HCT116 (cell line): ENCODE measurements at regions of chrX and their contacts with region 1.

Region 1: DNA sequence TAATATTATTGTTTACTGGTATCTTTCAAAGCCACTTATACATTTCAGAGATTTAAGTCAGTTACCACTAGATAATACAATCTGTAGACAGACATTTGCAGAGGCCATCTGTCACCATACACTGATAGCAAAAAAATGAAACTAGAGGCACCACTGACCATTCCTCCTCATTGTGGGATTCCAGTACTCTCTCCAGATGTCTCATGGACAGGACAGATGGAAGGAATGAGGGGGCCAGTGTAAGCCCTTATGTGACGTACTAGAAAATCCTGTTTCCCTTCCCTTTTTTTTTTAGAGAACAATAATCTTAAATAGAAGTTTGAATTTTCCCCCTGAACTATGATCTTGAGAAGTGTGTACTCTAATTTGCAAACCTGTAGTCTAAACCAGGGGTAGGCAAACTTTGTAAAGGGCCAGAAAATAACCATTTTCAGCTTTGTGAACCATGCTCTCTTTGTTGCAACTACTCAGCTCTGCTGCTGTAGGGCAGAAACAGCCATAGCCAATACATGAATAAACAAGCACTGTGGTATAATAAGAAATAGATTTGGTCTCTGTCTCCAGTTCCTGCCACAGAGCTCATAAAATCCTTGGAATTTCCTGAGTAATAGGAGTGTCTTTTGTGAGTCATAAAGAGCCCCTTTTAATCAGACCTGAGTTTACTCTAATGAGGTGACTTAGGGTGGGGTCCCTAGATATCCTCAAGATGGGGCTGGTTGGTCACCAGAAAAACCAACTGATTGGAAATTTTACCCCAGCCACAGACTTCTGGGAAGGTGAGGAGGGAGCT is 90.4 kb downstream of the MOSPD2 start:
- DNase-seq: peak; percentile 49
- ATAC-seq: peak; percentile 87
- H3K4me3 ChIP-seq: peak overlapping the region in 1 of 2 experiments; percentile 38; a peak in 2 of 4 replicates
- H3K27ac ChIP-seq: peak overlapping the region; percentile 72
- H3K4me1 ChIP-seq: peaks cover 14 to 19% of the 10 kb centered on the region in 2 experiments; a peak in 3 of 4 replicates
- H3K27me3 ChIP-seq: no peaks in the 10 kb centered on the region
- CTCF ChIP-seq: no peak
- POLR2A ChIP-seq: no peak
- RAD21 ChIP-seq: peak; percentile 25; the same call in 1 of the 2 replicates

Region 2: DNA sequence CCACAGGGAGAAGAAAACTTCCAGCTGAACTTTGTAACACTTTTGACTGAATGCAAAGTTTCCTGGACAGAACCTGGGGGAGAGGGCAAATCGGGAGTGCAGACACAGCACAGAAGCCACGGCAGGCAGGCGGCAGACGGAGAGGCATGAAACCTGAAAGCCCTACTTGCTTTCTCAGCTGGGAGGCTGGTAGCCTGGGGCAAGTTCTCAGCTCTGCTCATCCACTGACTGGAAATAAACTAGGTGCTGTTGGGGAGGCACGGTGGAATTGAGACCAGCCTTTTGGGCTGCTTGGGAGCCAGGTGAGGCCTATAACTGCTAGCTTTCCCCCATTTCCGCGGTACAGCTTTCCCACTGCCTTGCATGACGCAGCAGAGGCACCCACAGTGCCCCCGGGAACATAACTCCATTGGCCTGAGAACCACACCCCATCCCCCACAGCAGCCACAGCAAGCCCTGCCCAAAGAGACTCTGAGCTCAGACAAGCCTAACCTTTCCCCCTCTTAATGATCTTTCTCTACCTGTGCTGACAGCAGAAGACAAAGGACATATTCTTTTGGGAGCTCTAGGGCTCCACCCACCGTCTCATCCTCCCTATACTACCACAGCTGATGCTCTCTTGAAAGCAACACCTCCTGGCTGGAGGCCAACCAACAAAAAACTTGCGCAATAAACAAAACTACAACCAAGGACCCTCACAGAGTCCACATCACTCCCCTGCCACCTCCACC is 205.7 kb before region 1 on chrX:
- CTCF ChIA-PET with region 1: no interaction called
- POLR2A ChIA-PET with region 1: no interaction called
- RAD21 ChIA-PET with region 1: no interaction called
- intact Hi-C with region 1: no loop called
- DNase-seq: no peak
- ATAC-seq: no peak
- H3K4me3 ChIP-seq: no peak overlapping the region
- H3K27ac ChIP-seq: no peak overlapping the region
- H3K4me1 ChIP-seq: no peaks in the 10 kb centered on the region
- H3K27me3 ChIP-seq: no peaks in the 10 kb centered on the region
- CTCF ChIP-seq: no peak
- POLR2A ChIP-seq: no peak
- RAD21 ChIP-seq: no peak

Region 3: DNA sequence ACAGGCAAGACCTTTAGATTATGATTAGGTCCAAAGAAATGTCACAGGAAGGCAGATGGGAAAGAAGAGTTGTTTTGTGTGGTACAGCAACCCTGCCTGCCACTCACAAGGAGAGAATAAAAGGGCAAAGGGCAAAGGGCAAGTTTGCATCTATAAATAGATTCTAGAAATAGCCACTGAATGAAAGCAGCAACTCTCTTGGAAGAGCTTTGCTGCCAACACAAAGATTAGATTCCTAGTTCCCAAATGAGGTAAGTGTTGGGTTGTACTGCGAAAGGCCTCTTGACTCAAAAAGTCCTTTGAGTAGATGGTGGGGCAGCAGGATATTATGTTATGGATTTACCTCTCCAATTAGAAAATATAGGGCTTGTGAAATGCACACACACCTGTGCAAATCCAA is 29.2 kb before region 1 on chrX:
- CTCF ChIA-PET with region 1: no interaction called
- POLR2A ChIA-PET with region 1: interaction called, 3 read pairs
- RAD21 ChIA-PET with region 1: no interaction called
- intact Hi-C with region 1: loop called (anchors 1 kb)
- DNase-seq: no peak
- ATAC-seq: no peak
- H3K4me3 ChIP-seq: no peak overlapping the region
- H3K27ac ChIP-seq: no peak overlapping the region
- H3K4me1 ChIP-seq: peaks cover 0 to 22% of the 10 kb centered on the region in 2 experiments; a peak in 2 of 4 replicates
- H3K27me3 ChIP-seq: no peaks in the 10 kb centered on the region
- CTCF ChIP-seq: no peak
- POLR2A ChIP-seq: no peak
- RAD21 ChIP-seq: no peak